ENCODE measurements at regions of chr1 and their contacts with region 1.

Region 1: GRCh38 chr1:40338745-40339424 is 21.8 kb upstream of the COL9A2 start:
- DNase-seq: peak; percentile 73 to 90
- H3K4me3 ChIP-seq: no peak overlapping the region
- H3K4me1 ChIP-seq: peaks cover 8% of the 10 kb centered on the region
- H3K27me3 ChIP-seq: no peaks in the 10 kb centered on the region

Region 2: DNA sequence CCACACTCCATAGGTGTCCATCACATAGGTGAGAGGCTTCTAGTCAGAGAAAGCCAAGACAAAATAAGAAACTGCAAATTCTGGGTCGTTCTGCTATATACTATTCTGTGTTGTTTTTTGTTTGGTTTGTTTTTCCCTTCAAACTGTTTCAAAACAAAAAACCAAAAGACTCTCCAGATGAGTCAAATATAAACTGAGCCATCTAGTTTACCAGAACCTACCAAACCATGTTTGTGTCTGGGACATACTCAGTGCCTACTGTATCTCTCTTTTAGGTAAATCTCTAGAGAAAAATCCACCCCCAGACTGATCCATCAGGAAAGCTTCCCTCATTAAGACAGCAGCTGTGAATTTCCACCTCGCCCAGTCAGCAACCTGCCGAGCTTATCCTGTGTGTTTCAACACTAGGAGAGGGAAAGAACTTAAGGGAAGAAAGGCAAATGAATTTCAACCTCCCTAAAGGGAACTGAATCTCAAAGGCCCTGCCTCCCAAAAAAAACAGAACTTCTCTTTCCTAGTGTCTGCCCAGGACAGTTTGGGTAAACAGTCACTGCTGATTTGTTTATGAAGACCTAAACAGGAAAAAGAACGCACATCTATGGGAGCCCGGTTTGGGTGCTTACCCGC is 259.0 kb before region 1 on chr1:
- in situ Hi-C with region 1: loop called (anchors 5 kb)
- DNase-seq: no peak
- H3K4me3 ChIP-seq: no peak overlapping the region
- H3K4me1 ChIP-seq: no peaks in the 10 kb centered on the region
- H3K27me3 ChIP-seq: no peaks in the 10 kb centered on the region

Region 3: DNA sequence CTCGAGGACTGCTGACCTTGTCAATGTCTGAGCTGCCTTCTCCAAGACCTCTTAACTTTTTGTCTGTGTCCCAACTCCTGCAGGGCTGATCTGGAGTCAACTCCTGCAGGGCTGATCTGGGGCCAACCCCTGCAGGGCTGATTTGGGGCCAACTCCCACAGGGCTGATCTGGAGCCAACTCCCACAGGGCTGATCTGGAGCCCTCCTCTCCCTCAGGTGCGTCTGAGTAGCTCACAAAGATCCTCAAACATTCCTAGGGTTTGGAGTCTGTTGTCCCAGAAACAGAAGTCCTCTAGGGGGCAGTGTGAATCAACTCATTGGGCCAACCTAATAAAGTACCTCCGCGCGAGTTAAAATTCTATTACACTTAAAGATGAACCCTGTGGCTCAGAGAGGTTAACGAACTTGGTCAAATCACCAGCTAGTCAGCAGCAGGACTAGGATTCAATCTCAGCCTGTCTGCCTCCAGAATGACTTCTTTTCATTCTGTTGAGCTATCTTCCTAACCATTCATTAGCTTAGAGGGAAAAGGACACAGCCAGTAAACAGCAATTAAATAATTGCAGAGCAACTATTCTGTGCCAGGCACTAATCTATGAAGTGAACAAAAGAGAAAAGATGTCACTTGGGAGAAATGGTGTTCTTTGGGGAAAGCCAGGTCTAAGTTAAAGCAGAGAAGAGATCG is 194.9 kb before region 1 on chr1:
- in situ Hi-C with region 1: loop called (anchors 10 kb)
- DNase-seq: peak; percentile 65 to 80
- H3K4me3 ChIP-seq: no peak overlapping the region
- H3K4me1 ChIP-seq: no peaks in the 10 kb centered on the region
- H3K27me3 ChIP-seq: peaks cover 23% of the 10 kb centered on the region

Region 4: GRCh38 chr1:40241362-40241761 is 97.5 kb before region 1 on chr1:
- in situ Hi-C with region 1: no loop called
- DNase-seq: no peak
- H3K4me3 ChIP-seq: no peak overlapping the region
- H3K4me1 ChIP-seq: no peaks in the 10 kb centered on the region
- H3K27me3 ChIP-seq: no peaks in the 10 kb centered on the region